MCF 10A (cell line): ENCODE measurements at regions of chr2 and their contacts with region 1.

Region 1: DNA sequence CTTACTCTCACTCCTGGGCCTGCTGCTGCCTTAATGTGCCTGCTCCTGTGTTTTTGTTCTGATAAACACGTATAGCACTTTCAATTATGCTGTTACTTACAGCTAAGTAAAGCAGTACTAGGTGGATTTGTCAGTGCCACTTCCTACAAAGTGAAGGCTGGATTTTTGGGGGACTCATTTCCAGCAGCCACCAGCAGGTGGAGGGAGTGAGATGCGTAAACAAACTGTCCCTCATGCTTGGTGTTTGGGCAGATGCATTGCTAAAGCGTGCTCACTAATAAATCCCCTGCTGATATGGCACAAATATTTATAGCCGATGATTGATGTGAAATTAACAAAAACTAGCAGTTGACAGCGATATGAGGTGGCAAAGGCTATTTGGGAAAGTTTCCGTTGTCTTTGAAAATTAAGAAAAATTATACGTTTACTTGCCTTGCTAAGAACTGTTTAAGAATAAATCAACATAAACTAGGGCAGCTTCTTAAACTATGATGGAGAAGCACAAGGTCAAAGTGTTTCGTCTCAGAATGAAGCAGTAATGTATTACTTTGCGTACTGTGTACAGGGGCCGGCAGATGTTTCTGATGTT is 101.7 kb downstream of the AGAP1 start:
- DNase-seq: peak; percentile 76
- H3K4me3 Mint-ChIP-seq: no peak overlapping the region
- H3K27ac Mint-ChIP-seq: no peak overlapping the region
- H3K4me1 Mint-ChIP-seq: peaks cover 16% of the 10 kb centered on the region
- H3K27me3 Mint-ChIP-seq: no peaks in the 10 kb centered on the region
- CTCF ChIP-seq: peak; percentile 76

Region 2: DNA sequence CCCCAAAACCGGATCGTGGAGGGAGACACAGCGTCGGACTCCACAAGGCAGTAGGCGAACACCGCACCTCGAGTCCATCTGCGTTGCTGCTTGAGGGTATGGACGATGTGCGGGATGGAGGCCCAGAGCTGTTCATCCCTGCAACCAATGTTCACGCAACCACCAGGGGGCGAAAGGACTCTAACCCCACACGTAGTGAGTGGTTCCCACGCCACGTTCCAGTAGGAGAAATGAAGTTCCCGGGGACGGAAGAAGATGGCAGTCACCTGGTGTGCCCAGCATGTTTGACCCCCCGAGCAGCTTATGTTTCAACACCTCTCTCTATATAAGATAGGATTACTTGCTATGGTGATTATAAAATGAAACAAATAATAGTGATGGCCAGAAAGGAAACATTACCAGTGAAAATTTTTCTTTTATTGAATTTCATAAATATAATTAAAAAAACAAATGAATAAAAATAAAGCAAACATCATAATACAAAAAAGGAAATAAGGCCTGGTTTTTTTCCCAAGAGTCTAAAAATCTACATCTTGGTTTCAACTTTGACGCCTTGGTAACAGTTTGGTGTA is 459.4 kb before region 1 on chr2:
- CTCF ChIA-PET with region 1: interaction called, 185 read pairs
- POLR2A ChIA-PET with region 1: interaction called, 15 read pairs
- intact Hi-C with region 1: loop called (anchors 1 kb)
- DNase-seq: peak; percentile 86
- H3K4me3 Mint-ChIP-seq: peak overlapping the region; percentile 18
- H3K27ac Mint-ChIP-seq: no peak overlapping the region
- H3K4me1 Mint-ChIP-seq: peaks cover 7% of the 10 kb centered on the region
- H3K27me3 Mint-ChIP-seq: peaks cover 36% of the 10 kb centered on the region
- CTCF ChIP-seq: peak; percentile 63

Region 3: GRCh38 chr2:235183786-235184185 is 411.7 kb before region 1 on chr2:
- CTCF ChIA-PET with region 1: no interaction called
- POLR2A ChIA-PET with region 1: no interaction called
- intact Hi-C with region 1: no loop called
- DNase-seq: no peak
- H3K4me3 Mint-ChIP-seq: no peak overlapping the region
- H3K27ac Mint-ChIP-seq: no peak overlapping the region
- H3K4me1 Mint-ChIP-seq: no peaks in the 10 kb centered on the region
- H3K27me3 Mint-ChIP-seq: peaks cover 56% of the 10 kb centered on the region
- CTCF ChIP-seq: no peak

Region 4: DNA sequence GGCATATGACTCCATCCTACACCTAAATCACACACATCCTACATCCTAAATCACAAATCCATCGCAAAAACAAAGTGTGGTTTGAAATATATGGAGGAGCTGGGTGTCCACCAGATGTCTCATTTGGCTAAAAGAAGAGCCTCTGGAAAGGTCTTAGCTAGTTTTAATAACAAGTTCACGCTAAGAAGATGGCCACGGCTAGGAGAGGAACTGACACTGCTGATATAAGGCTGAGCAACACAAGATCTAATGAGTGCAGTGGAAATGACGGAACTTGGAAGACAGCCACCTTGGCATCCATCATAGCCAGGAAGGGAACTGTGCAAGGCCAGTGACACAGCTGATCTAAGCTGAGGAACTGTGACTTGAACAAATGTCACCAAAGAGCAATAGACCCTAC is 161.7 kb before region 1 on chr2:
- CTCF ChIA-PET with region 1: interaction called, 3 read pairs
- POLR2A ChIA-PET with region 1: no interaction called
- intact Hi-C with region 1: loop called (anchors 1 kb)
- DNase-seq: peak; percentile 31
- H3K4me3 Mint-ChIP-seq: no peak overlapping the region
- H3K27ac Mint-ChIP-seq: no peak overlapping the region
- H3K4me1 Mint-ChIP-seq: peaks cover 5% of the 10 kb centered on the region
- H3K27me3 Mint-ChIP-seq: peaks cover 50% of the 10 kb centered on the region
- CTCF ChIP-seq: no peak

Region 5: GRCh38 chr2:235583144-235583543 is 12.4 kb before region 1 on chr2:
- CTCF ChIA-PET with region 1: interaction called, 12 read pairs
- POLR2A ChIA-PET with region 1: no interaction called
- intact Hi-C with region 1: no loop called
- DNase-seq: no peak
- H3K4me3 Mint-ChIP-seq: no peak overlapping the region
- H3K27ac Mint-ChIP-seq: no peak overlapping the region
- H3K4me1 Mint-ChIP-seq: no peaks in the 10 kb centered on the region
- H3K27me3 Mint-ChIP-seq: no peaks in the 10 kb centered on the region
- CTCF ChIP-seq: no peak

Region 6: DNA sequence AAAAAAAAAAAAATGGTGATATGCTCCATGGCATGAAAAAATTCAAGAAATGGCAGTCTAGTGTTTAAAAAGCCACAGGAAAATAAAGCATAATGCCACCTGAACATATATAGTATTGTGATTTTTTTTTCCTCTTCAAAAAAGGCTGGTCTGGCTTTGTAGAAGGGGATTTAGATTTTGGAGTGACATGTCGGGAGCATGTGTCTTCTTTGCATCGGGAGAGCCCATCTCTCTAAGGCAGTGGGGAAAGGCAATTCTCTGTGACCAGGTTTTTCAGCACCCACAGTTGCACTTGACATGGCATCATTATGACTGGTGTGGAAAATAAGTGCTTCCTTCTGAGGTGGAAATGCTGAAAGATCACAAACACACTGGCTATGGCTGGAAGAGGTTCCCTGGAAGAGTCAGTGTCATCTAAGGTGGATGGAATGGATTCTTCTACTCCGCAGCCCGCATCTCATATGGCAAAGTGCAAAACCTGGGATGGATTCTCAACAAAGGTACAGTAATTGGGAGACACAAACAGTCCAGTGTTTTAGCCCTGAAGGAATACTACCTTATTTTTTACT is 70.8 kb after region 1 on chr2:
- CTCF ChIA-PET with region 1: interaction called, 29 read pairs
- POLR2A ChIA-PET with region 1: interaction called, 3 read pairs
- intact Hi-C with region 1: loop called (anchors 1 kb)
- DNase-seq: peak; percentile 88
- H3K4me3 Mint-ChIP-seq: peak overlapping the region; percentile 82
- H3K27ac Mint-ChIP-seq: peak overlapping the region; percentile 83
- H3K4me1 Mint-ChIP-seq: peaks cover 10% of the 10 kb centered on the region
- H3K27me3 Mint-ChIP-seq: no peaks in the 10 kb centered on the region
- CTCF ChIP-seq: no peak

Region 7: GRCh38 chr2:235740821-235741220 is 145.3 kb after region 1 on chr2:
- CTCF ChIA-PET with region 1: interaction called, 240 read pairs
- POLR2A ChIA-PET with region 1: interaction called, 36 read pairs
- intact Hi-C with region 1: loop called (anchors 1 kb)
- DNase-seq: peak; percentile 45
- H3K4me3 Mint-ChIP-seq: no peak overlapping the region
- H3K27ac Mint-ChIP-seq: peak overlapping the region; percentile 61
- H3K4me1 Mint-ChIP-seq: peaks cover 24% of the 10 kb centered on the region
- H3K27me3 Mint-ChIP-seq: no peaks in the 10 kb centered on the region
- CTCF ChIP-seq: peak; percentile 40

Region 8: DNA sequence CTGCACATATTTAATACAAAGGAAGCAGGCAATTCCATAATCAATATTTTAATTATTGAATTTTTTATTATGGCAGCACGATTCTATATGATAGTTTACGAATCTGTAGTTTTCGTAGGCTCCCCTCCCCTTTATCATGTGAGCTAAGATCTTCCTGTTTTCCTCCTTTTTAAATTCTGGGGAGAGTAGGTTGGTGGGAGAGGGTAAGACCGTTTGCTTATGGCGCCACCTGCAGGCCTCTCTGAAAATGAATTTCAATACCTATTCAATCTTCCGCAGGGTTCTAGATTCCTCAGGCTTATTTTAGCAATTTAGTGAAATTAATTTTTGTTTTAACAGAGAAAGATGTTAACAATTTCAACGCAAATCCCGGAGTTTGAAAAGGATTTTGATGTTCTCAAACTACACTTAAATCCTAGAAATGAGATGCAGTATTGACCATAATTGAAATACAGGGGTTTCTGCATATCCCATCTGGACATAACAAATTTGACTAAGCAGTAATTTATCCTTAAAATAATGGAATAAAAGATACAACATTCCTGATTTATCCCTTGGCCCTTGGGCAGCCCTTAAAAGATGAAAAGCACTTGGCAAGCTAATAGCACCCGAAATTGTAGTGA is 585.4 kb after region 1 on chr2:
- CTCF ChIA-PET with region 1: no interaction called
- POLR2A ChIA-PET with region 1: no interaction called
- intact Hi-C with region 1: loop called (anchors 5 kb)
- DNase-seq: peak; percentile 75
- H3K4me3 Mint-ChIP-seq: no peak overlapping the region
- H3K27ac Mint-ChIP-seq: no peak overlapping the region
- H3K4me1 Mint-ChIP-seq: peaks cover 13% of the 10 kb centered on the region
- H3K27me3 Mint-ChIP-seq: no peaks in the 10 kb centered on the region
- CTCF ChIP-seq: peak; percentile 57